Activated naive CD4-positive, alpha-beta T cell treated with anti-CD3 and anti-CD28 coated beads for 36 hours (primary cell): ENCODE measurements at regions of chr2 and their contacts with region 1.

Region 1: DNA sequence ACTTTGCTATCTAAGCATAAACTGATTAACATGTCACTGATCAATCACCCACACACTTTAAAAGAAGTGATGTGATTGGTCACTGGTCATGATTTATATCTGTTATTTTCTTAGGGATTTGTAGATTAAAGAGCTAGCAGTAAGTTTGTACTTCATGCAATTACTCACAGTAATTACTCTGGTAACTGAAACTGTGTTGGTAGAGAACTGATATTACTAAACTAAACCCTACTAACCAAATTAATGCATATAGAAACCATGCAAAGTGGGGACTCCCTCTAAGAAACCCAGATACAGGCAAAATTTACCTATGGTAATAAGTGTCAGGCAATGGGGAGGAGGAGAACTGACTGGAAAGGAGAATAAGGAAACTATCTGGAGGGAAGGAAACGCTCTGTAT is 44.8 kb upstream of the C2orf15 start:
- DNase-seq: no peak
- H3K4me3 Mint-ChIP-seq: no peak overlapping the region
- H3K27ac Mint-ChIP-seq: peak overlapping the region; percentile 62
- H3K4me1 Mint-ChIP-seq: peaks cover 13% of the 10 kb centered on the region
- H3K27me3 Mint-ChIP-seq: no peaks in the 10 kb centered on the region

Region 2: GRCh38 chr2:99141110-99142108 is 44.7 kb after region 1 on chr2 and contains the start of gene C2orf15:
- CTCF ChIA-PET with region 1: interaction called, 4 read pairs
- intact Hi-C with region 1: loop called (anchors 2 kb)
- DNase-seq: peak; percentile 96
- H3K4me3 Mint-ChIP-seq: peak within 1 kb of the TSS; percentile 93
- H3K27ac Mint-ChIP-seq: peak within 1 kb of the TSS; percentile 86
- H3K4me1 Mint-ChIP-seq: peaks cover 17% of the 10 kb centered on the region
- H3K27me3 Mint-ChIP-seq: no peaks in the 10 kb centered on the region
- total RNA-seq, gene C2orf15: 1.4 to 1.6 TPM

Region 3: GRCh38 chr2:99512181-99512591 is 415.5 kb after region 1 on chr2:
- CTCF ChIA-PET with region 1: no interaction called
- intact Hi-C with region 1: no loop called
- DNase-seq: no peak
- H3K4me3 Mint-ChIP-seq: no peak overlapping the region
- H3K27ac Mint-ChIP-seq: no peak overlapping the region
- H3K4me1 Mint-ChIP-seq: no peaks in the 10 kb centered on the region
- H3K27me3 Mint-ChIP-seq: no peaks in the 10 kb centered on the region